ENCODE measurements at regions of chr2 and their contacts with region 1.

Region 1: GRCh38 chr2:230326453-230327417 is at the start of gene SP140L:
- DNase-seq: peak; percentile 94
- H3K4me3 Mint-ChIP-seq: peak within 1 kb of the TSS; percentile 92
- H3K27ac Mint-ChIP-seq: peak within 1 kb of the TSS; percentile 90
- H3K4me1 Mint-ChIP-seq: peaks cover 67% of the 10 kb centered on the region
- H3K27me3 Mint-ChIP-seq: no peaks in the 10 kb centered on the region
- total RNA-seq, gene SP140L: 48.9 and 49.1 TPM in 2 replicates

Region 2: DNA sequence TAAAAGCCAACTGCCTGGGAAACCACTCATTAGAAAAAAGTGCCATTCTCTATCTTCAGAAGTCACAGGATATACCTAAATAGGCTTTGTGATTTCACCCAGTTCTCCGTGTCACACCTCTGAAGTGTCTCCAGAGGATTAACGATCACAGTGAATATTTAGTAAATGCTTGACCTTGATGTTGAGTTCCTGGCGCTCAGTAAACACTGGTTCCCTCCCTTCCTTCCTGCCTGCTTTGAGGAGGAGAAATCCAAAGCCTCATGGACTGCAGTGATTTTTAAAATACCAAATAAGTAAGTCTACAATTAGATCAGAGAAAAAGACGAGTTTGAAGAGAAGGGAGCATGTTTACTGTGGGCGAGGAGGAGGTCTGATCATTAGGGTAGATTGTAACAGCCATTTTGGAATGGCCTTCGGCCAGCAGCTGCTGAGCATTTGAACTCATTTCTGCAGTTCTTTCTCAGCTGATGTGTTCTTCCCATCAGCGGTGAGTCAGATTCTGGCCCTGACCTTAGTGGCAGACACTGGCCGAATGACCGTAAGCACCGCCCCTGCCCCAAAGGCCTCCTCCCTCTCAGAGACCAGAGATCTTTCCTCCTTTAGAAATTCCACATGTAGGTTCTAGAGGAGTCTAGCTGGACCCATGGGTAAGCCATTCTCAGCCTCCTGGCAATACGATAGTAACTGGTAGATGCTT is 195.9 kb before region 1 on chr2:
- intact Hi-C with region 1: no loop called
- DNase-seq: peak; percentile 19
- H3K4me3 Mint-ChIP-seq: no peak overlapping the region
- H3K27ac Mint-ChIP-seq: no peak overlapping the region
- H3K4me1 Mint-ChIP-seq: peaks cover 3% of the 10 kb centered on the region
- H3K27me3 Mint-ChIP-seq: peaks cover 10% of the 10 kb centered on the region

Region 3: GRCh38 chr2:230347659-230348305 is 21.0 kb after region 1 on chr2:
- intact Hi-C with region 1: loop called (anchors 1 kb)
- DNase-seq: peak; percentile 86
- H3K4me3 Mint-ChIP-seq: peak overlapping the region; percentile 62
- H3K27ac Mint-ChIP-seq: peak overlapping the region; percentile 93
- H3K4me1 Mint-ChIP-seq: peaks cover 59% of the 10 kb centered on the region
- H3K27me3 Mint-ChIP-seq: no peaks in the 10 kb centered on the region

Measured in activated CD4-positive, alpha-beta T cell treated with anti-CD3 and anti-CD28 coated beads, Interleukin-2, amount 10 ng/mL, durations not matched to agents 24 days and 14 days (primary cell).